OCI-LY7 (cell line): ENCODE measurements at regions of chr1 and their contacts with region 1.

Region 1: GRCh38 chr1:231337472-231338269 is at the start of gene EXOC8:
- DNase-seq: peak; percentile 97
- H3K4me3 ChIP-seq: peak within 1 kb of the TSS; percentile 99
- H3K27ac ChIP-seq: peak within 1 kb of the TSS; percentile 96
- H3K4me1 ChIP-seq: peaks cover 36% of the 10 kb centered on the region
- CTCF ChIP-seq: 0 out of 2 replicates have a peak, but pooled peaks have one; percentile 21
- total RNA-seq, gene EXOC8: 14.8 and 17.0 TPM in 2 replicates

Region 2: GRCh38 chr1:231240883-231241735 is 96.6 kb before region 1 on chr1 and contains the start of gene GNPAT:
- CTCF ChIA-PET with region 1: interaction called, 3 read pairs
- POLR2A ChIA-PET with region 1: interaction called, 12 read pairs
- intact Hi-C with region 1: loop called (anchors 2 kb)
- DNase-seq: peak; percentile 90
- H3K4me3 ChIP-seq: peak within 1 kb of the TSS; percentile 97
- H3K27ac ChIP-seq: peak within 1 kb of the TSS; percentile 60
- H3K4me1 ChIP-seq: peaks cover 25% of the 10 kb centered on the region
- CTCF ChIP-seq: no peak
- total RNA-seq, gene GNPAT: 37.9 and 51.7 TPM in 2 replicates

Region 3: DNA sequence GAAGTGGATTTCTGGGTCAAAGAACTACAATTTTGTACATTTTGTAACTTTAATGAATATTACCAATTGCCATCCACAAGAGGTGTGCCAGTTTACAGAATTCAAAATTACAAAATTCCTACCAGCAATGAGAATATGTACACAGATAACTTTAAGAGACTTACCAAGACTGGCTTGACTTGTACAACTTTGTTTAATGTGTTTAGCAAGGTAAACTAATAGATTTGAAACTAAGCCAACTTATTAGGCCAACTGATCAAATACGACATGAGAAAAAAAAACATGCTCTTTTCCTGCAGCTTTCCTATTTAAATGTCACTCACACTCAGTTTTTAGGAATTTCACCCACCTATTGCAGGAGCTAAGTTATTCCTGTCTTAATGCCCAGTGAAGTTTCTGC is 11.4 kb before region 1 on chr1:
- CTCF ChIA-PET with region 1: no interaction called
- POLR2A ChIA-PET with region 1: interaction called, 10 read pairs
- intact Hi-C with region 1: no loop called
- DNase-seq: no peak
- H3K4me3 ChIP-seq: no peak overlapping the region
- H3K27ac ChIP-seq: no peak overlapping the region
- H3K4me1 ChIP-seq: no peaks in the 10 kb centered on the region
- CTCF ChIP-seq: no peak